HepG2 (cell line): ENCODE measurements at regions of chr3 and their contacts with region 1.

Region 1: DNA sequence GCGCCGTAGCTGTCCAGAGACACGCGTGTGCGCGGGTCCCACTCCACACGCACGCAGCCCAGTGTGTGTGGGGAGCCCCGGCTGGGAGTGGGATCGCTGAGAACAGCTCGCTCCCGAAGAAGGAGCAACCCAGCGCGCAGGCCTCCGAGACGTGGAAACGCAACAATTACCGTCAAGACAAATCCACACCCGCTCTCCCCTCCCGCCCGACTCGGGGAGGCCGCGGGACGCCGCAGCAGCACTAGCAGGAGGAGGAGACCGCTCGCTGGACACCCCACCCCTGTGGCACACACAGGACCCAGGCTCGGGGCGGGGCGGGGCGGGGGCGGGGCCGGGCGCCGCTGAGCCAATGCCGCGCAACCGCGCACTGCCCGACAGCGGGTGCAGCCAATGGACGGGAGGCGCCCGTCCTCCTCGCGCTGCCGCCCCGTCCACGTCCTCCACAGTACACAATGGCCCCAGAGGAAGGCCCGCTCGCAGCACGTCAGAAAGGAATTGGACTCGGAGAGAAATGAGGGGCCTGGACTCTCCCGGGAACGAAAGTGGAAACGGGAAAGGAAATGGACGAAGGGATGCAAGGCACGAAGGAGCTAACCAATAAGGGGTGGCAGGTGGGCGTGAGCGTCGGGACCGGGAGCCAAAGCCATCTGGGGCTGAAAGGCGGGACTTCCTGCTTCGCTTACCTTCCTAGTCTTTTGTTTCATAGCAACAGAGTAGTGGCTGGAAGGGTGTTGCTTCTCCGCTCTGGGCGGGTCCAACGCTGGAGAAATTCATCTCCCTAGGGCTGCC is at the start of gene CBLB:
- DNase-seq: peak; percentile 90
- ATAC-seq: peak; percentile 95
- H3K4me3 ChIP-seq: peak within 1 kb of the TSS; percentile 83 to 100 (median 94)
- H3K27ac ChIP-seq: peak within 1 kb of the TSS; percentile 88
- H3K4me1 ChIP-seq: peaks cover 46% of the 10 kb centered on the region
- H3K27me3 ChIP-seq: no peaks in the 10 kb centered on the region; a peak in 1 of 5 replicates
- CTCF ChIP-seq: no peak
- EP300 ChIP-seq: no peak
- POLR2A ChIP-seq: peak; percentile 48 to 73; a peak in 3 of 4 replicates
- RAD21 ChIP-seq: no peak
- total RNA-seq, gene CBLB: 5.1 and 9.8 TPM in 2 replicates

Region 2: DNA sequence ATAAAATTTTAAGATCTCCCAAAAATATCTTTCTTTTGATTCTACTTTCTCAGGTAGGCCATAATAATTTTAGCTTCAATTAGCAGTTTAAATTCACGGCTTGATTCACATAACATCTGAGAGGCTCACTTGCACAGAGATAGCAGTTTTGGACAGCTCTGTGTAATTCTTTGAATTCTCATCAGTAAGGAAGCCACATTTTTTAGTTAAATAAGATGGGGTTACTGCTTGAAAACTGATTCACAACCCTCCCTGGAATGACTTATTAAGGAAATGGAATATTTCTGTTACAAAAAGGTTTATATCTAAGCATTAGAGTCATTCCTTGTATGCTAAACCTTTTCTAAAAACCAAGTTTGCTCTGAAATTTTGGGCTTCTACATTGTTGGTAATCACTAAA is 289.5 kb before region 1 on chr3:
- CTCF ChIA-PET with region 1: no interaction called
- POLR2A ChIA-PET with region 1: no interaction called
- in situ Hi-C with region 1: no loop called
- intact Hi-C with region 1: loop called (anchors 10 kb)
- DNase-seq: no peak
- ATAC-seq: no peak
- H3K4me3 ChIP-seq: no peak overlapping the region
- H3K27ac ChIP-seq: no peak overlapping the region
- H3K4me1 ChIP-seq: no peaks in the 10 kb centered on the region
- H3K27me3 ChIP-seq: no peaks in the 10 kb centered on the region
- CTCF ChIP-seq: no peak
- EP300 ChIP-seq: no peak
- POLR2A ChIP-seq: no peak
- RAD21 ChIP-seq: no peak

Region 3: GRCh38 chr3:105688821-105689220 is 180.1 kb before region 1 on chr3:
- CTCF ChIA-PET with region 1: no interaction called
- POLR2A ChIA-PET with region 1: no interaction called
- in situ Hi-C with region 1: no loop called
- intact Hi-C with region 1: loop called (anchors 2 kb)
- DNase-seq: peak; percentile 53
- ATAC-seq: peak; percentile 90
- H3K4me3 ChIP-seq: no peak overlapping the region
- H3K27ac ChIP-seq: no peak overlapping the region
- H3K4me1 ChIP-seq: peaks cover 10% of the 10 kb centered on the region
- H3K27me3 ChIP-seq: no peaks in the 10 kb centered on the region
- CTCF ChIP-seq: no peak
- EP300 ChIP-seq: no peak; a peak in 1 of 4 replicates
- POLR2A ChIP-seq: no peak
- RAD21 ChIP-seq: no peak

Region 4: DNA sequence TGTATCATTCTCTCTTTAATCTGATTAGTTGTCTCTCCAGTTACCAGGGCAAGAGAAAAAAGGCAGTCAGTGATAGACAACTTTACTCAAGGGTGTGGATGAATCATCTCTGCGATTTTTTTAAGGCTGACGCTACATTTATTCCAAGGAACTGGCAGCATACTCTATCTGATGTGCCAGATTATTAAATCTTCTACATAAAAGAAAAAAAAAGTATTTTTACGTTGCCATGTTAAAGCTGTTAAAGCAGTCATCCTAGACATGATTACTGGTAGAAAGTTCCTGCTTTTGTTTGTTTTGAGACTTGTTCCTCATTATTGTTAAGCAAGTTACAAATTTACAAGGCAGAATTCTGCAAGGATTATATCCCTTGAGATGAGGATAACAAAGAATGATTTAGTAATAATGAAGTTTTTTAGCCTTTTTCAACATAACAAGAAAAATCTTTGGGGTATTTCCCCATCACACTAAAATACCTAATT is 121.8 kb before region 1 on chr3:
- CTCF ChIA-PET with region 1: no interaction called
- POLR2A ChIA-PET with region 1: no interaction called
- in situ Hi-C with region 1: no loop called
- intact Hi-C with region 1: loop called (anchors 5 kb)
- DNase-seq: no peak
- ATAC-seq: no peak; the same call in 2 of the 3 replicates
- H3K4me3 ChIP-seq: no peak overlapping the region
- H3K27ac ChIP-seq: no peak overlapping the region
- H3K4me1 ChIP-seq: peaks cover 16% of the 10 kb centered on the region
- H3K27me3 ChIP-seq: no peaks in the 10 kb centered on the region
- CTCF ChIP-seq: no peak
- EP300 ChIP-seq: no peak
- POLR2A ChIP-seq: no peak
- RAD21 ChIP-seq: no peak

Region 5: GRCh38 chr3:105806361-105806760 is 62.6 kb before region 1 on chr3:
- CTCF ChIA-PET with region 1: no interaction called
- POLR2A ChIA-PET with region 1: interaction called, 3 read pairs
- in situ Hi-C with region 1: no loop called
- intact Hi-C with region 1: loop called (anchors 5 kb)
- DNase-seq: peak; percentile 50
- ATAC-seq: no peak
- H3K4me3 ChIP-seq: no peak overlapping the region
- H3K27ac ChIP-seq: no peak overlapping the region
- H3K4me1 ChIP-seq: peaks cover 29% of the 10 kb centered on the region
- H3K27me3 ChIP-seq: no peaks in the 10 kb centered on the region
- CTCF ChIP-seq: no peak
- EP300 ChIP-seq: no peak
- POLR2A ChIP-seq: no peak
- RAD21 ChIP-seq: no peak

Region 6: DNA sequence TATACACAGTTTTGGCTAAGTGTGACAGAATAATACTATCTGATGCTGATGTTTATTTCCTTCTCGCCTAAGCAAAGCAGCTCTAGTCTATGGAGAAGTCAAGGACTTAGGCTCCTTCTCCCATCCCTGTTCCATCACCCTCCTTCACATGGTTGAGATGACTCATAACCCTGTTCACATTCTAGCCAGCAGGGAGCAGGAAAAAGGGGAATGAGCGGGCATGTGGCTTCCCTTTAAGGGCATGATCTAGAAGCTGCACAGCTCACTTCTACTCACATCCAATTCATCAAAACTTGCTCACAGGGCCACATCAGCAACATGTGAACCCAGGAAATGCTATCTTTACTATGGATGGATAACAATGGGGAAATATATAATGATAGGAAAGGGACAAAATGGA is 41.0 kb before region 1 on chr3:
- CTCF ChIA-PET with region 1: no interaction called
- POLR2A ChIA-PET with region 1: interaction called, 3 read pairs
- in situ Hi-C with region 1: no loop called
- intact Hi-C with region 1: loop called (anchors 5 kb)
- DNase-seq: peak; percentile 21
- ATAC-seq: peak; percentile 82
- H3K4me3 ChIP-seq: no peak overlapping the region
- H3K27ac ChIP-seq: no peak overlapping the region
- H3K4me1 ChIP-seq: peaks cover 19% of the 10 kb centered on the region
- H3K27me3 ChIP-seq: no peaks in the 10 kb centered on the region
- CTCF ChIP-seq: no peak
- EP300 ChIP-seq: no peak
- POLR2A ChIP-seq: no peak
- RAD21 ChIP-seq: no peak

Region 7: GRCh38 chr3:105915524-105915923 is 46.6 kb after region 1 on chr3:
- CTCF ChIA-PET with region 1: no interaction called
- POLR2A ChIA-PET with region 1: no interaction called
- in situ Hi-C with region 1: no loop called
- intact Hi-C with region 1: no loop called
- DNase-seq: no peak
- ATAC-seq: no peak
- H3K4me3 ChIP-seq: no peak overlapping the region
- H3K27ac ChIP-seq: no peak overlapping the region
- H3K4me1 ChIP-seq: no peaks in the 10 kb centered on the region
- H3K27me3 ChIP-seq: no peaks in the 10 kb centered on the region
- CTCF ChIP-seq: no peak
- EP300 ChIP-seq: no peak
- POLR2A ChIP-seq: no peak
- RAD21 ChIP-seq: no peak

Region 8: DNA sequence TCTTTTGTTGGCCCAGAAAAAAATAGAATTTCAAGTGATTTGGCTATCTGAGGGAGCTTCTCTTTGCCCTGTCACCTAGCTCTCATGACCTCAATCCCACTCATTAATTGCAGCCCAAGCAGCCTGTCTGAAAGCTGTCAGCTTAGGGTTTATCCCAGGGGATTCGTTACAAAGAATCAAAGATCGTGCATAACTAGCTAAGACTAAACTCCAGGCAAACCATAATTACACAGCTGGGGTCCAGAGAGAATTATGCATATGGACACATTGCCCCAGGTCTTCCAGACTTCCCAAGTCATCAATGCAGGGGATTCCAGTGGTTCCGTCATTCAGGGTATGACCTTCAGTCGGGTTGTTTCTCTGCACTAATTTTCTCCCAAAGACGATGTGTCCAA is 91.4 kb after region 1 on chr3:
- CTCF ChIA-PET with region 1: no interaction called
- POLR2A ChIA-PET with region 1: interaction called, 12 read pairs
- in situ Hi-C with region 1: no loop called
- intact Hi-C with region 1: loop called (anchors 2 kb)
- DNase-seq: no peak
- ATAC-seq: no peak
- H3K4me3 ChIP-seq: no peak overlapping the region
- H3K27ac ChIP-seq: no peak overlapping the region
- H3K4me1 ChIP-seq: peaks cover 19% of the 10 kb centered on the region
- H3K27me3 ChIP-seq: no peaks in the 10 kb centered on the region
- CTCF ChIP-seq: no peak
- EP300 ChIP-seq: no peak
- POLR2A ChIP-seq: no peak
- RAD21 ChIP-seq: no peak